Mammary epithelial cell (primary cell): ENCODE measurements at regions of chr5 and their contacts with region 1.

Region 1: DNA sequence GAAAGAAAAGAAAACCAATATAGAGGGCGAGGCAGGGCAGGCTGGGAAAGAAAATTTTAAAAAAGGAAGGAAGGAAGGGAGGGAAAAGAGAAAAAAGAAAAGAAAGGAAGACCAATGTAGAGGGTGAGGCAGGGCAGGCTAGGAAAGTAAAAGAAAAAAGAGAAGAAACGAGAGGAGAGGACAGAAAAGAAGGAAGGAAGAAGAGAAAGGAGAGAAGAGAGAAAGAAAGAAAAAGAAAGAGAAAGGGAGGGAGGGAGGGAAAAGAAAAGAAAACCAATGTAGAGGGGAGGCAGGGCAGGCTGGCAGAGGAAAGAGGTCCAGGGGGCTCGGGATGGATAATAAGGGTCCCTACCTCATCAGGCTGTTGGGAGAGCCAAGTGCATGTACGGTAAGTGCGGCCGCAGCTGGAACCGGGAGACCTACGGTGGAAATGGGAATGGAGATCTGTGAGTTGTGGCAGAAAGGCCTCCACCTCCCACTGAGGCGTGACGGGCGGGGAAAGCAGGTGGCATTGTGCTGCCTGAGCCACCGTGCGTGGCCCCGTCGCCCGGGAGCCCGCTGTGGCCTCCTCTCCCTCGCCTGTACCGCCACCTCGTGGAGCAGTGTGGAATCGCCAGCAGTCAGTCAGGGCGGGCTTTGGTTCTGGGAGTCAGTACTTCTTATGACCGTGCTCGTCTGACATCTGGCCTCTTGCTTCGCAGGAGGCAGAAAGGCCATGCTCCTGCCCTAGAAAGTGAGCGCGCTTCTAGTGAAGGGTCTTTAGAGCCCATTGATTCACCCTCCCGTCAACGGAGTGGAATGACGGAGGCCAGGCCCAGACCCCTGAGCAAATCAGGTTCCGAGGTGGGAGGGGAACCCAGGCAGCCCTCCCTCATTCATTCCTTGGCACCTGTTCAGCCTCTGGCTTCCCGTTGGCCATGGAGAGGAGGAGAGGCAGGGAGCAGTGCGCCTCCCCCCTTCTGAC is 10.4 kb upstream of the NHP2 start:
- DNase-seq: peak; percentile 64
- H3K4me3 ChIP-seq: peak overlapping the region in 1 of 3 experiments; percentile 11
- H3K27ac ChIP-seq: no peak overlapping the region
- H3K4me1 ChIP-seq: no peaks in the 10 kb centered on the region
- H3K27me3 ChIP-seq: no peaks in the 10 kb centered on the region
- CTCF ChIP-seq: peak; percentile 96 to 100

Region 2: GRCh38 chr5:177198738-177199137 is 965.3 kb before region 1 on chr5:
- CTCF ChIA-PET with region 1: no interaction called
- dilution Hi-C with region 1: no loop called
- in situ Hi-C with region 1: no loop called
- intact Hi-C with region 1: no loop called
- DNase-seq: no peak
- H3K4me3 ChIP-seq: no peak overlapping the region
- H3K27ac ChIP-seq: no peak overlapping the region
- H3K4me1 ChIP-seq: peaks cover 11% of the 10 kb centered on the region
- H3K27me3 ChIP-seq: no peaks in the 10 kb centered on the region
- CTCF ChIP-seq: no peak

Region 3: DNA sequence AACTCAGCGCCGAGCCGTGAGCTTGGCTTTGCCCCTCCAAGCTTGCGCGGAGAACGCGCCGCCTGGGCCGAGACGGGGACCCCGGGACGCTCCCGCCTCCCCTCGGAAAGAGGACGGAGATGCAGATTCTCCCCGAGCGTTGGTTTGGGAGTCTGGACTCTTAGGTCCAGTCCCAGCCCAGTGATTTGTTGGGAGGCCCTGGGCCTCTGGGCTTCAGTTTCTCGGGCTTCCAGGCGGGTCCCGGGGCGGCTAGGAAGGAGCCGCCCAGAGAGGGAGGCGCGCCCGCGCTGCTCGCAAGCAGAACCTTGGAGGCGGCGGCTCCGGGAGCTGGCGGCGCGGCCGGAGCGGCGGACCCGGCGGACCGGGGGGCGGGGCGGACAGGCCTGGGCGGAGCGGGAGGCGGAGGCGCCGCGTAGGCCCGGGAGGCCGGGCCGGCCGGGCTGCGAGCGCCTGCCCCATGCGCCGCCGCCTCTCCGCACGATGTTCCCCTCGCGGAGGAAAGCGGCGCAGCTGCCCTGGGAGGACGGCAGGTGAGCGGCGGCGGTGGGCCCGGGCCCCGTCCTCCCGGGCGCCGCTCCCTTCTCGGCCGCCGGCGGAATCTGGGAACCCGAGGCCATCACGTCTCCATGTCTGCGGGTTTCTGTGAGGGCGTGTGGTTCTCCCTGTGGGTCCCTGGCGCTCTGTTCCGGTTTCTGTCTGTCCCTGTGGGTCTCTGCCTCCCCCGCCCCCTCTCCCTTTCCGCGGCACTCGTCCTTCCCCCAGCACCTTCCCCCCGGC is 564.1 kb before region 1 on chr5 and contains the start of gene B4GALT7:
- CTCF ChIA-PET with region 1: no interaction called
- dilution Hi-C with region 1: no loop called
- in situ Hi-C with region 1: no loop called
- intact Hi-C with region 1: loop called (anchors 10 kb)
- DNase-seq: peak; percentile 73
- H3K4me3 ChIP-seq: peak within 1 kb of the TSS; percentile 68 to 86 (median 80)
- H3K27ac ChIP-seq: peak within 1 kb of the TSS; percentile 69
- H3K4me1 ChIP-seq: peaks cover 9% of the 10 kb centered on the region
- H3K27me3 ChIP-seq: no peaks in the 10 kb centered on the region
- CTCF ChIP-seq: peak in 1 of 2 donors; percentile 4
- total RNA-seq, gene B4GALT7: 33.1 to 38.8 TPM

Region 4: DNA sequence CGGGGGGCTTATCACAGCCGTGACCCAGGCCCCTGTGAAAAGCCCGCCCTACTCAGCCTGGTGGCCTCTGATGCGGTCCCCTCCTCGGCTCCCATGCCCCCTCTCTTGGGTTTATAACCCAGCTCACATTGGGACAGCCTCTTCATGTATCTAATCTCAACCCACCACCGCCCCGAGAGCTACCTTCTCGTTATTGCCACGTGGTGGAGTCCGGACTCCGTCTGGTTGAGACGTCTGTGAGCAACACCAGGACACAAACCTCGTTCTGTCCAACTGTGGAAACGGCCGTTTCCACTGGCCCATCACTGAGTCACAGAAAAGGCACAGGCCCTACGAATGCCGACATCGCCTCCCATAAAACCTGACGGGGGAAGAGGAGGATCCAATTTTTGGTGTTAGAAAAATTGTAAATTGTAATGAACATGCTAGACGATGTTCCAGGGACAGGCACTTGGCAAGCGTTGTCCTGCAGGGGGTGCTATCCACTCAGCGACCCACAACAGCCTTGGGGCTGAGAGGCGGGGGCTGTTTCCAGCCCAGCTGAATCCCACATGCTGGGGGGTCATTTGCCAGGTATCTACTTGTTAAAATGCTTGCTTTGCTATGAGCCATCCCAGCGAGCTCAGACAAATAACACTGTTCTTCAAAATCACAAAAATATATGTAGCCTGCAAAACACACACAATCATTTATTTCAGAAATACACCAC is 88.1 kb before region 1 on chr5:
- CTCF ChIA-PET with region 1: interaction called, 4 read pairs
- dilution Hi-C with region 1: no loop called
- in situ Hi-C with region 1: loop called in 1 of 2 experiments (anchors 5 kb)
- intact Hi-C with region 1: loop called (anchors 1 kb)
- DNase-seq: peak; percentile 65
- H3K4me3 ChIP-seq: peak overlapping the region in 1 of 3 experiments; percentile 18
- H3K27ac ChIP-seq: no peak overlapping the region
- H3K4me1 ChIP-seq: peaks cover 13% of the 10 kb centered on the region
- H3K27me3 ChIP-seq: peaks cover 3% of the 10 kb centered on the region
- CTCF ChIP-seq: peak; percentile 74 to 91

Region 5: GRCh38 chr5:178146020-178146820 is 17.8 kb before region 1 on chr5:
- CTCF ChIA-PET with region 1: no interaction called
- dilution Hi-C with region 1: no loop called
- in situ Hi-C with region 1: no loop called
- intact Hi-C with region 1: loop called (anchors 2 kb)
- DNase-seq: peak; percentile 81
- H3K4me3 ChIP-seq: no peak overlapping the region
- H3K27ac ChIP-seq: no peak overlapping the region
- H3K4me1 ChIP-seq: peaks cover 12% of the 10 kb centered on the region
- H3K27me3 ChIP-seq: no peaks in the 10 kb centered on the region
- CTCF ChIP-seq: peak; percentile 84 to 94

Region 6: DNA sequence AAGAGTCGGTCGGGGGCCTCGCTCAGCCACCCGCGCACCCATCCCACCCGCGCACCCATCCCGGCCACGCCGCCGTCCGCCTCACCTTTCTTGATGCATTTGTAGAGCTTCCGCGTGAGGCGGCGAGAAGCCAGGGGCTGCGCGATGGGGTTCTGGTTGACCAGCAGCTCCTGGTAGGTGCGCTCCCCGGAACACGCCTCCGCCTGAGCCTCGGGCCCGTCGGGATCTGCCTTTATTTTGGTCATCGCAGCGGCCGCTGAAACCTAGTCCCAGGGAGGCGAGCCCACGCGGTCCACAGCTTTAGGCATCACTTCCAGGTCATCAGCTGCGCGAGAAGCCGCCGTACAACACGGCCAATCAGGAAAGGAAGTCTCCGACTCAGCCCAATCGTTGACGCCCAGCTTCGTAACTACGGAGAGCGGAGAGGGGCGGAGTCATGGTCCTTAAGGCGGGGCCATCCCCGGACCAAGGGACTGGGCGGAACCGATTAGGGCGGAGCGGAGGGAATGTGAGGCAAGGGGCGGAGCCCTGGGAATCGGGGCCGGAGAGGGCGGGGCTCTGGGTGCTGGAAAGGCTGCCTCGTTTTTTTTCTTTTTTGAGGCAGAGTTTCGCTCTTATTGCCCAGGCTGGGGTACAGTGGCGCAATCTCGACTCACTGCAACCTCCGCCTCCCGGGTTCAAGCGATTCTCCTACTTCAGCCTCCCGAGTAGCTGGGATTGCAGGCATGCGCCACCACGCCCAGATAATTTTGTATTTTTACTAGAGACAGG is 10.3 kb before region 1 on chr5 and contains the start of gene NHP2:
- CTCF ChIA-PET with region 1: interaction called, 13 read pairs
- dilution Hi-C with region 1: no loop called
- in situ Hi-C with region 1: no loop called
- intact Hi-C with region 1: no loop called
- DNase-seq: peak; percentile 98
- H3K4me3 ChIP-seq: peak within 1 kb of the TSS; percentile 67 to 92 (median 83)
- H3K27ac ChIP-seq: peak within 1 kb of the TSS; percentile 36
- H3K4me1 ChIP-seq: peaks cover 10% of the 10 kb centered on the region
- H3K27me3 ChIP-seq: no peaks in the 10 kb centered on the region
- CTCF ChIP-seq: no peak
- total RNA-seq, gene NHP2: 72.8 to 152 TPM